ENCODE measurements at regions of chr17 and their contacts with region 1.

Region 1: GRCh38 chr17:53142890-53143289 is 679.8 kb upstream of the KIF2B start:
- DNase-seq: no peak
- ATAC-seq: no peak
- H3K4me3 ChIP-seq: no peak overlapping the region
- H3K27ac ChIP-seq: no peak overlapping the region
- H3K4me1 ChIP-seq: no peaks in the 10 kb centered on the region
- H3K27me3 ChIP-seq: no peaks in the 10 kb centered on the region
- CTCF ChIP-seq: no peak

Region 2: DNA sequence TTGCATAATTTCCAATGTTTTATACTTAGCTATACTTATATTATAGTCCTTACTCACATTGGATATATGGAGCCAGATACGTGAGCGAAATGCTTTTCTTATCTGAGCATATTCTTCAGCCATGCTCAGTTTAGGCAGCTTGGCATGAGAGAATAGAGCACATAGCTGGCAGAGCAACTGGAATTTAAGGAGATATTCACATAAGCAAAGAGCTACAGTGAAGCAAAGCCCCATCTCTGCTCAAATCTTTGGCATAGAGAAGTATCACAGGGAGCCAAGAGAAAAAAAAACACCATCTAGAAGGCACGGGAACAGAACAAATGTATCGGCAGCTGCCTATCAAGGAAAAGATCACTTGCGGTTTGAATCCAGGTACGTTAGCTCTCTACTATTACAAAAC is 54.4 kb before region 1 on chr17:
- CTCF ChIA-PET with region 1: no interaction called
- POLR2A ChIA-PET with region 1: no interaction called
- in situ Hi-C with region 1: no loop called
- intact Hi-C with region 1: loop called (anchors 10 kb)
- DNase-seq: no peak
- ATAC-seq: no peak
- H3K4me3 ChIP-seq: no peak overlapping the region
- H3K27ac ChIP-seq: no peak overlapping the region
- H3K4me1 ChIP-seq: no peaks in the 10 kb centered on the region
- H3K27me3 ChIP-seq: no peaks in the 10 kb centered on the region
- CTCF ChIP-seq: no peak

Region 3: DNA sequence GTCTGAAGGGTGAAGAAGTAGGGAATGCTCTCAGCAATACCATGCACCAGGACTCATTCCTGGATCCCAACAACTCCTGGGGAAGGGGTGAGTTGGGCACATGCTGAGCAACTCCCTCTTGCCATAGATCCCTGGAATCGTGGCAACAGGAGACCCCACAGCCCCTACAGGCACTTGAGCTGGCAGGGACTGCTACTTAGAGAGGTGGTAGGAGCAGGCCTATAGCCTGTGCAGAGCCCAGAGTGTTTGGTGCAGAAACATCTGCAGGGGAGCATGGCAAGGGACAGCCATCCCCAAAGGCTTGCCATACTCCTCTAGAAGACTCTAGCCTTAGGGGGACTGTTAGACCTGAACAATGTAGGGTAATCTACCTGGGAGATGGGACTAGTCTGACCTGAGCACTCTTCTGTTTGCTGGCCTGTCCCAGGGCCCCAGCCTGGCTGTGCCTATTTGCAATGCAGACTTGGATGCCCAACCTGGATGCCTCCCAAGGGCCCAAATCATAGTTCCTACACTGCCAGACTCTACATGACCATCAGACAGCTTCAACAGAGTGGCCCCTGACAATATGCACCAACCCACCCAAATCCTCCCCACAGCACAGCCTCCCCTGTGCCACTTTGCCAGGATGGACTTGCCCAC is 111.2 kb after region 1 on chr17:
- CTCF ChIA-PET with region 1: no interaction called
- POLR2A ChIA-PET with region 1: no interaction called
- in situ Hi-C with region 1: no loop called
- intact Hi-C with region 1: no loop called
- DNase-seq: no peak
- ATAC-seq: no peak
- H3K4me3 ChIP-seq: no peak overlapping the region
- H3K27ac ChIP-seq: no peak overlapping the region
- H3K4me1 ChIP-seq: no peaks in the 10 kb centered on the region
- H3K27me3 ChIP-seq: no peaks in the 10 kb centered on the region
- CTCF ChIP-seq: no peak

Measured in Panc1 (cell line).